GM12878 (cell line): ENCODE measurements at regions of chr6 and their contacts with region 1.

Region 1: GRCh38 chr6:127342946-127343808 is at the start of gene ECHDC1:
- DNase-seq: no peak
- ATAC-seq: peak; percentile 82
- H3K4me3 ChIP-seq: peak within 1 kb of the TSS; percentile 93
- H3K27ac ChIP-seq: peak within 1 kb of the TSS; percentile 98
- H3K4me1 ChIP-seq: peaks cover 10% of the 10 kb centered on the region
- H3K27me3 ChIP-seq: no peaks in the 10 kb centered on the region
- CTCF ChIP-seq: 0 out of 6 replicates have a peak, but pooled peaks of 1 of the 3 experiments have one; percentile 1
- EP300 ChIP-seq: no peak
- POLR2A ChIP-seq: peak; percentile 87
- RAD21 ChIP-seq: no peak
- polyA plus RNA-seq, gene ECHDC1: 71.6 to 85.4 TPM

Region 2: GRCh38 chr6:126786262-126786661 is 556.9 kb before region 1 on chr6:
- CTCF ChIA-PET with region 1: no interaction called
- POLR2A ChIA-PET with region 1: no interaction called
- RAD21 ChIA-PET with region 1: no interaction called
- SMC1A ChIA-PET with region 1: no interaction called
- in situ Hi-C with region 1: no loop called
- intact Hi-C with region 1: no loop called
- DNase-seq: no peak
- ATAC-seq: no peak
- H3K4me3 ChIP-seq: no peak overlapping the region
- H3K27ac ChIP-seq: no peak overlapping the region
- H3K4me1 ChIP-seq: no peaks in the 10 kb centered on the region
- H3K27me3 ChIP-seq: no peaks in the 10 kb centered on the region
- CTCF ChIP-seq: no peak
- EP300 ChIP-seq: no peak
- POLR2A ChIP-seq: no peak
- RAD21 ChIP-seq: no peak

Region 3: GRCh38 chr6:127291495-127291894 is 51.7 kb before region 1 on chr6:
- CTCF ChIA-PET with region 1: interaction called, 11 read pairs
- POLR2A ChIA-PET with region 1: no interaction called
- RAD21 ChIA-PET with region 1: interaction called, 14 read pairs
- SMC1A ChIA-PET with region 1: interaction called, 8 read pairs
- in situ Hi-C with region 1: no loop called
- intact Hi-C with region 1: no loop called
- DNase-seq: peak; percentile 39
- ATAC-seq: peak; percentile 95
- H3K4me3 ChIP-seq: no peak overlapping the region
- H3K27ac ChIP-seq: peak overlapping the region; percentile 15; the same call in 1 of the 2 replicates
- H3K4me1 ChIP-seq: peaks cover 13% of the 10 kb centered on the region; the same call in 1 of the 2 replicates
- H3K27me3 ChIP-seq: no peaks in the 10 kb centered on the region
- CTCF ChIP-seq: no peak
- EP300 ChIP-seq: peak in 1 of 2 experiments; percentile 50; a peak in 1 of 4 replicates
- POLR2A ChIP-seq: no peak
- RAD21 ChIP-seq: no peak

Region 4: GRCh38 chr6:127328043-127328609 is 15.1 kb before region 1 on chr6:
- CTCF ChIA-PET with region 1: interaction called, 14 read pairs
- POLR2A ChIA-PET with region 1: interaction called, 12 read pairs
- RAD21 ChIA-PET with region 1: interaction called, 6 read pairs
- SMC1A ChIA-PET with region 1: interaction called, 10 read pairs
- in situ Hi-C with region 1: no loop called
- intact Hi-C with region 1: no loop called
- DNase-seq: no peak
- ATAC-seq: no peak
- H3K4me3 ChIP-seq: no peak overlapping the region
- H3K27ac ChIP-seq: no peak overlapping the region
- H3K4me1 ChIP-seq: no peaks in the 10 kb centered on the region
- H3K27me3 ChIP-seq: no peaks in the 10 kb centered on the region
- CTCF ChIP-seq: no peak
- EP300 ChIP-seq: no peak
- POLR2A ChIP-seq: no peak
- RAD21 ChIP-seq: no peak